Activated B cell treated with CpG ODN at 0.5 μM for 24 hours (primary cell): ENCODE measurements at regions of chr5 and their contacts with region 1.

Region 1: GRCh38 chr5:157502143-157502647 is 42.2 kb downstream of the NIPAL4 start:
- DNase-seq: no peak
- ATAC-seq: peak; percentile 73
- H3K4me3 Mint-ChIP-seq: peak overlapping the region; percentile 65
- H3K27ac Mint-ChIP-seq: peak overlapping the region; percentile 93
- H3K4me1 Mint-ChIP-seq: peaks cover 88% of the 10 kb centered on the region
- H3K27me3 Mint-ChIP-seq: no peaks in the 10 kb centered on the region
- CTCF ChIP-seq: no peak

Region 2: GRCh38 chr5:157459715-157460599 is 42.2 kb before region 1 on chr5 and contains the start of gene NIPAL4:
- CTCF ChIA-PET with region 1: no interaction called
- POLR2A ChIA-PET with region 1: interaction called, 7 read pairs
- intact Hi-C with region 1: loop called (anchors 1 kb)
- DNase-seq: peak; percentile 48
- ATAC-seq: peak; percentile 54
- H3K4me3 Mint-ChIP-seq: peak within 1 kb of the TSS; percentile 84
- H3K27ac Mint-ChIP-seq: peak within 1 kb of the TSS; percentile 72
- H3K4me1 Mint-ChIP-seq: peaks cover 75% of the 10 kb centered on the region
- H3K27me3 Mint-ChIP-seq: no peaks in the 10 kb centered on the region
- CTCF ChIP-seq: no peak
- total RNA-seq, gene NIPAL4: 2.7 and 2.8 TPM in 2 replicates

Region 3: DNA sequence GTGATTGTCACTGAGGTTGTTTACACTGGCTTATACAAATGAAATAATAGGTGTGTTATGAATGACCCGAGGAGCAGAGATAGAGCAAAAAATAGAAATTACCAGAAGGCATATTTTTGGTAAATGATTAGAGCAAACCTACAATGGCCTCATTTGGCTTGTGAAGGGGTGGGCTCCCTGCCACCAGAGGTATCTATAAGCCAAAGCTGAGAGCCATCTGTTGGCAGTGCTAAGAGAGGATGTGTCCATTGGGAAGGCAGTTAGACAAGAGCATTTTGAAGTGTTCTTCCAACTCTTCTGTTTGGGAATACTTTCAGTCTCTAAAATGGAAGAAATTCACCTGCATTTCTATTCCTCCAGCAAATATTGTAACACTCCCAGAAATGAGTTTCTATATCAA is 31.6 kb before region 1 on chr5:
- CTCF ChIA-PET with region 1: no interaction called
- POLR2A ChIA-PET with region 1: no interaction called
- intact Hi-C with region 1: no loop called
- DNase-seq: no peak
- ATAC-seq: no peak
- H3K4me3 Mint-ChIP-seq: no peak overlapping the region
- H3K27ac Mint-ChIP-seq: no peak overlapping the region
- H3K4me1 Mint-ChIP-seq: peaks cover 48% of the 10 kb centered on the region
- H3K27me3 Mint-ChIP-seq: no peaks in the 10 kb centered on the region
- CTCF ChIP-seq: no peak

Region 4: GRCh38 chr5:157486221-157486681 is 15.9 kb before region 1 on chr5:
- CTCF ChIA-PET with region 1: no interaction called
- POLR2A ChIA-PET with region 1: interaction called, 31 read pairs
- intact Hi-C with region 1: loop called (anchors 1 kb)
- DNase-seq: no peak
- ATAC-seq: peak; percentile 33
- H3K4me3 Mint-ChIP-seq: peak overlapping the region; percentile 56
- H3K27ac Mint-ChIP-seq: peak overlapping the region; percentile 95
- H3K4me1 Mint-ChIP-seq: peaks cover 86% of the 10 kb centered on the region
- H3K27me3 Mint-ChIP-seq: no peaks in the 10 kb centered on the region
- CTCF ChIP-seq: no peak

Region 5: DNA sequence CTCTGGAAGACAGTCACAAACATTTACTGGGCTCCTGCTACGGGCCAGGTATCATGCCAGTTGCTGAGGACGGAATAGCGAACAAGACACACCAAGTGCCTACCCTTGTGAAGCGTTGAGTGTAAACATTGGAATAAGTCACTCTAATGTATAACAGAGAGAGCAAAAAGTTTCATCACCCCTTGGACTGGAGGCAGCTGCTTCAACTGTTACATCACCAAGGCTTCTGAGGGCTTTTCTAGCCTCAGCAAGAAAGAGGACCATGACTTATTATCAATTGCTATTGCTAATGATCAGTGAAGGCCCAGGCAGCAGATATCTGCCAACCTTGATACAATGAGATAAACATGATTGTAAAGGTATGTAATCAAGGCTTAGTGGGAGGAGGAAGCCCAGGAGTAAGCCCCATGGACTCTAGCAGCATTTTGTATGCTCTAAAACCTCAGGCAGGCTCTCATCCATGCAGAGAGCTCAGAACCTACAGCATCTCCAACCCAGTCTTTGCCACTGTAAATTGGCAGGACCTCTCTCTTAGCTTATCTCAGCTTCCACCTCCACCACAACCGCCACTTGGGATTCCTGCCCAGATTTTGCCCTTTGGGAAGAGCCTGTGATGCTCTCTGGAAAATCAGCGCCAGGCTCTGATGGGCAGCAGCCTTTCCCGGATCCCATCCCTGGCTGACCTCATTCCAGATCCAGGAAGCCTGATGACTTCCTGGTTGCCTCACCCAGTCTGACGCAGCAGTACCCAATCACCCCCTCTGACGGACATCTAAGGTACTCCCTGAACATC is 18.9 kb after region 1 on chr5:
- CTCF ChIA-PET with region 1: interaction called, 3 read pairs
- POLR2A ChIA-PET with region 1: interaction called, 28 read pairs
- intact Hi-C with region 1: loop called (anchors 1 kb)
- DNase-seq: no peak
- ATAC-seq: no peak
- H3K4me3 Mint-ChIP-seq: peak overlapping the region; percentile 47
- H3K27ac Mint-ChIP-seq: peak overlapping the region; percentile 93
- H3K4me1 Mint-ChIP-seq: peaks cover 89% of the 10 kb centered on the region
- H3K27me3 Mint-ChIP-seq: no peaks in the 10 kb centered on the region
- CTCF ChIP-seq: no peak

Region 6: DNA sequence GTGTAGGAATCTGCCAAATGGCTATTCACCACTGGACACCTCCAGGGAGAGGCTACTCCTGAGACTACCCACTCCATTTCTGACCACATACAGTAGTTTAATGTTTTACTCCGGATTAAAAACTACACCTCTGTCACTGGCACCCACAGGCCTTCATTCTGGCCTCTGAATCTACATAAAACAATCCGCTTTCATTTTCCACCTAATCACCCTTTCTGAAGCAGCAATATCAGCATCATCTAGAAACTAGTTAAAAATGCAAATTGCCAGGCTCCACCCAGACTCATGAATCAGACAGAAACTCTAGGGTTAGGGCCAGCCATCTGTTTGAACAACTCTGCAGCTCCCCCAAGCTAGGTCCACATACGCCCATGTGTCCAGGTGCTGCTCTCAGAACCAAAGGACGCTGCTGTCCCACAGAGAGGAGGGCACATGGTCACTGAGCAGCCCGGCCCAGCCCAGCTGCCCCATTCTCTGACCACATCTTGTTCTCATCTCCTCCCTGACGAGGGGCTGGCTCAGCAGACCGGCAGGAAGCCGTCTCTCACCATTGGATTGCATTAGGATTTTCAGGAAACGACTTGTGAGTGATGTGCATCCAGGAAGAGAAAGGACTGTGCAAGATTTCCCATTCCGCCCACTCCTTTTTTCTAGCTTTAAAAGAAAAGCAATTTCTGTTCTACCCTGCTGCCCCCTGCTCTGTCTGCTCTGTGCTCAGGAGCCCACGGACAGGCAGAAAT is 38.7 kb after region 1 on chr5:
- CTCF ChIA-PET with region 1: no interaction called
- POLR2A ChIA-PET with region 1: interaction called, 4 read pairs
- intact Hi-C with region 1: loop called (anchors 1 kb)
- DNase-seq: peak; percentile 37
- ATAC-seq: peak; percentile 91
- H3K4me3 Mint-ChIP-seq: peak overlapping the region; percentile 60
- H3K27ac Mint-ChIP-seq: peak overlapping the region; percentile 92
- H3K4me1 Mint-ChIP-seq: peaks cover 86% of the 10 kb centered on the region
- H3K27me3 Mint-ChIP-seq: no peaks in the 10 kb centered on the region
- CTCF ChIP-seq: no peak

Region 7: GRCh38 chr5:157603333-157604190 is 101.4 kb after region 1 on chr5:
- CTCF ChIA-PET with region 1: no interaction called
- POLR2A ChIA-PET with region 1: interaction called, 4 read pairs
- intact Hi-C with region 1: loop called (anchors 2 kb)
- DNase-seq: no peak
- ATAC-seq: peak; percentile 48
- H3K4me3 Mint-ChIP-seq: peak overlapping the region; percentile 25
- H3K27ac Mint-ChIP-seq: peak overlapping the region; percentile 83
- H3K4me1 Mint-ChIP-seq: peaks cover 85% of the 10 kb centered on the region
- H3K27me3 Mint-ChIP-seq: no peaks in the 10 kb centered on the region
- CTCF ChIP-seq: no peak